ENCODE measurements at regions of chr6 and their contacts with region 1.

Region 1: GRCh38 chr6:28863604-28864320 is 60.0 kb downstream of the TRIM27 start:
- DNase-seq: peak; percentile 87
- H3K4me3 Mint-ChIP-seq: peak overlapping the region; percentile 86
- H3K27ac Mint-ChIP-seq: peak overlapping the region; percentile 85
- H3K4me1 Mint-ChIP-seq: peaks cover 53% of the 10 kb centered on the region
- H3K27me3 Mint-ChIP-seq: peaks cover 14% of the 10 kb centered on the region

Region 2: GRCh38 chr6:28542440-28543296 is 321.1 kb before region 1 on chr6:
- CTCF ChIA-PET with region 1: no interaction called
- POLR2A ChIA-PET with region 1: no interaction called
- DNase-seq: peak; percentile 63
- H3K4me3 Mint-ChIP-seq: peak overlapping the region; percentile 75
- H3K27ac Mint-ChIP-seq: peak overlapping the region; percentile 63
- H3K4me1 Mint-ChIP-seq: peaks cover 29% of the 10 kb centered on the region
- H3K27me3 Mint-ChIP-seq: peaks cover 62% of the 10 kb centered on the region

Region 3: DNA sequence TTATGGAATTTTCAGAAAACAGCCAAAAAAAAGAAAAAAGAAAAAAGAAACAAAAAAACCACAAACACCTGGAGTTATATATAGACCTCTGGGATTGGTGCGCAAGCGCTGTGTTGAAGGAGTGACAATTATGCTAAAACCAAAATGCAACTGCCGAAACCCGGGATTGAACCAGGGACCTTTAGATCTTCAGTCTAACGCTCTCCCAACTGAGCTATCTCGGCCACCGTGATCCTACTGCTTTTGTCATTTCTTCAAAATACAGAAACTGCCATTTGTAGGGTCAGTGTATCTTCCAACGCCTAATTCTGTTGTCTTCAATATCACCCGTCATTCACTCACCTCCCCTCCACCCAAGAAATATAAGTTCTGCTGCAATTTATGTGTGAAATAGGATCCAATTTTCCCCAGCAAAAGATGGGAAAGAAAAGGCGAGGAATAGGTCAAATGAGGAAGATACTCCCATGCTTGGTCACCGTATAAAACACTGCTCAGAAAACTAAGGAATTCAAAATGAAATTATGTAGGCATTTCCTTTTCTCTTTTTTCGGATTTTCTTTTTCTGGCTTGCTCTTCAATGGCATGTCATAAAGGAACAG is 56.0 kb before region 1 on chr6:
- CTCF ChIA-PET with region 1: no interaction called
- POLR2A ChIA-PET with region 1: no interaction called
- DNase-seq: no peak
- H3K4me3 Mint-ChIP-seq: no peak overlapping the region
- H3K27ac Mint-ChIP-seq: no peak overlapping the region
- H3K4me1 Mint-ChIP-seq: peaks cover 16% of the 10 kb centered on the region
- H3K27me3 Mint-ChIP-seq: peaks cover 83% of the 10 kb centered on the region

Region 4: GRCh38 chr6:28838634-28839442 is 24.9 kb before region 1 on chr6:
- CTCF ChIA-PET with region 1: interaction called, 12 read pairs
- POLR2A ChIA-PET with region 1: interaction called, 3 read pairs
- DNase-seq: peak; percentile 80
- H3K4me3 Mint-ChIP-seq: peak overlapping the region; percentile 92
- H3K27ac Mint-ChIP-seq: peak overlapping the region; percentile 81
- H3K4me1 Mint-ChIP-seq: peaks cover 27% of the 10 kb centered on the region
- H3K27me3 Mint-ChIP-seq: peaks cover 47% of the 10 kb centered on the region

Region 5: GRCh38 chr6:28923318-28924102 is 59.7 kb after region 1 on chr6 and contains the start of gene TRIM27:
- CTCF ChIA-PET with region 1: interaction called, 10 read pairs
- POLR2A ChIA-PET with region 1: no interaction called
- DNase-seq: peak; percentile 81
- H3K4me3 Mint-ChIP-seq: peak within 1 kb of the TSS; percentile 89
- H3K27ac Mint-ChIP-seq: peak within 1 kb of the TSS; percentile 95
- H3K4me1 Mint-ChIP-seq: peaks cover 45% of the 10 kb centered on the region
- H3K27me3 Mint-ChIP-seq: no peaks in the 10 kb centered on the region
- total RNA-seq, gene TRIM27: 63.1 to 66.6 TPM

Region 6: DNA sequence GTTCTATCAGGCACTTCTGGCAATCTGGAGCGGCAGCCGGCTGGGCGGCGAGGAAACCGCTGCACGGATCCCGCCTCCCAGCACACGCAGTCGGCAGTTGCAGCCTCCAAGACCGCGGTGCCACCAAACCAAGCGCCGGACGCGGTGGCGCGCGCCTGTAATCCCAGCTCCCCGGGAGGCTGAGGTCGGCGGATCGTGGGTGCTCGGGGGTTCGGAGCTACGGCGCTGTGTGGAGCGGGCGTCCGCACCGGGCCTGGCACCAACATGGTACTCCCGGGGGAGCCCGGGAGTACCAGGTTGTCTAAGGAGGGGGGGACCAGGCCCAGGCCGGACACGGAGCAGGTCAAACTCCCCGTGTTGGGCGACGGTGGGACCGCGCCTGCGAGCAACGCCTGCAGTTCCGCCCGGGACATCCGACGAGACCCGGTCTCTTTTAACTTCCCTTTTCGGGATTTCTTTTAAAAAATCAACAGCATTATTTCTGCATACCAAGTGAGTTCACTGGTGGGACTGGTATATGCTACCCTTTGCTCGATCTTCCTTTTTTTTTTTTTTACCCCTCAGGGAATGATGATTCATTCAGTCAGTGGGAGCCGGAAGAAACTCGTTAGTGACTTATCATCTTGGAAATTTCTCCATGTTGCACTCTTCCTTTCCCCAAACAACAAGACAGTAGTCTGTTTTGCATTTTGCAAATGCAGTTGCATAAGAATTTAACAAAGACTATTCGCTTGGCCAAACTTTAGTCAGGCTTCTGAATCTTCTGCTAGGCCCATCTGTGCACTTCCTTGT is 113.8 kb after region 1 on chr6:
- CTCF ChIA-PET with region 1: no interaction called
- POLR2A ChIA-PET with region 1: no interaction called
- DNase-seq: no peak
- H3K4me3 Mint-ChIP-seq: peak overlapping the region; percentile 48
- H3K27ac Mint-ChIP-seq: no peak overlapping the region
- H3K4me1 Mint-ChIP-seq: peaks cover 38% of the 10 kb centered on the region
- H3K27me3 Mint-ChIP-seq: peaks cover 47% of the 10 kb centered on the region

Region 7: DNA sequence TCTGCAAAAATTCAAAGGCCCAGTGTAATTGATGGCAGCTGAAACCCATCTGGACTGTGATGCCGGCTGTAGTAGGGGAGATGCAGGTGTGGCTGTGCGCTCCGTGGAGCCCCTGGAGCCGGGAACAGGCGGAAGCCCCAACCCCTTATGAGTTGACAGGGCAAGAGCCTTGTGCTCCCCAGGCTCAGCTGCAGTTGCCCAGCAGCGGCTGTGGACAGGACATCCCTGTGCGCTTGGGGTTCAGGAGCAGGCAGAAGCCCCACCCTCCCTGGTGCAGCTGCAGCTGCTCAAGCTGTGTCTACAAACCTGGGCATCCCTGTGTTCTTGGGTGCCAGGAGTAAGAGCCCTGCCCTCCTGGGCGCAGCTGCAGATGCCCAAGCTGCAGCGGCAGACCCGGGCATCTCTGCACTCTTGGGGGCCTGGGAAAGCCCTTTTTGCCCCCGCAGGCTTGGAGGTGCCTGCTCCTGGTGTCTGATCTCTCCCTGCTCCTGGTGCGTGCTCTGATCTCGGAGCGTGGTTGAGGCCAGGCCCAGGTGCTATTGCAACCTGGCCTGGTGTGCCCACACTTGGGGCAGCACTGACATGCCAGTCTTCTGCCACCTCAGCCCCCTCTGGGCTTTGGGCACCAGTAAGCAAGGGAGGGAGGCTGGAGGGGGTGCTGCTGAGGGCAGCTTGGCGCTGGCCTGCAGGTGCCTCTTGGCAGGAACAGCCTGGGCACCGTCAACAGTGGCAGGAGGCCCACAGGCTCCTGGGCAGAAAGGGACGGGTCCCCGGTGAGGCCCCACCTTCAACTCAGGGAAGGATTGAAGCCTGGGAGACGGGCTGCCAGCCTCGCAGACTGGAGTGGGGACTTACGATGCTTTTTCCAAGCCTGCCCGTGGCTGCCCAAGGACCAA is 337.3 kb after region 1 on chr6:
- CTCF ChIA-PET with region 1: no interaction called
- POLR2A ChIA-PET with region 1: no interaction called
- DNase-seq: no peak
- H3K4me3 Mint-ChIP-seq: no peak overlapping the region
- H3K27ac Mint-ChIP-seq: no peak overlapping the region
- H3K4me1 Mint-ChIP-seq: no peaks in the 10 kb centered on the region
- H3K27me3 Mint-ChIP-seq: peaks cover 2% of the 10 kb centered on the region

Measured in activated CD4-positive, alpha-beta T cell treated with anti-CD3 and anti-CD28 coated beads, Interleukin-2, amount 10 ng/mL, durations not matched to agents 7 days and 5 days (primary cell).